Activated T-helper 1 cell treated with anti-CD3 and anti-CD28 coated beads, Interleukin-12 subunit alpha, Interleukin-12 subunit beta, Interleukin-2, Interleukin-4 antibody, amounts not matched to agents 30 ng/mL and 10 ng/mL and 1 ng/mL, durations not matched to agents 14 hours and 24 hours and 36 hours (primary cell): ENCODE measurements at regions of chr11 and their contacts with region 1.

Region 1: GRCh38 chr11:64778508-64779346 is at the start of gene SF1:
- DNase-seq: peak; percentile 99
- H3K4me3 Mint-ChIP-seq: peak within 1 kb of the TSS; percentile 87
- H3K27ac Mint-ChIP-seq: peak within 1 kb of the TSS; percentile 97
- H3K4me1 Mint-ChIP-seq: peaks cover 57% of the 10 kb centered on the region
- H3K27me3 Mint-ChIP-seq: peaks cover 2% of the 10 kb centered on the region
- total RNA-seq, gene SF1: 518 and 538 TPM in 2 replicates

Region 2: DNA sequence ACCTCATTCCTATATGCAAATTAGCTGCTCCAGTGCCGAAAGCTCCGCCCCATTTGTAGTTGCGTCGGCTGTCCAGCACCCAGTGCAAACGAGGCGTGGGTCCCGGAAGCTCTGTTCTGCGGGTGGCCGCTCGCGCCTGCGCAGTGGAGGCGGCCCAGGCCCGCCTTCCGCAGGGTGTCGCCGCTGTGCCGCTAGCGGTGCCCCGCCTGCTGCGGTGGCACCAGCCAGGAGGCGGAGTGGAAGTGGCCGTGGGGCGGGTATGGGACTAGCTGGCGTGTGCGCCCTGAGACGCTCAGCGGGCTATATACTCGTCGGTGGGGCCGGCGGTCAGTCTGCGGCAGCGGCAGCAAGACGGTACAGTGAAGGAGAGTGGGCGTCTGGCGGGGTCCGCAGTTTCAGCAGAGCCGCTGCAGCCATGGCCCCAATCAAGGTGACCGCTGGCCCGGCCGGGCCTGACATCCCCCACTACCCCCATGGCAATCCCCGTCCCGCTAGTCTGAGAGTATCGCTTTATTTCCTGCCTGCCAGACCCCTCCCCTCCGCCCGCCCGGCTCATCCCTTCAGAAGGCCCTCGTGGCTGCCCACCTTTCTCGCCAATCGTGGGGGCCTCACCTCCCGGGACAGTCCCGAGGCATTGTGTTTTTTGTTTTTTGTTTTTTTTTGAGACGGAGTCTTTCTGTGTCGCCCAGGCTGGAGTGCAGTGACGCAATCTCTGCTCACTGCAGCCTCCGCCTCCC is 460.6 kb before region 1 on chr11 and contains the start of gene PRDX5:
- intact Hi-C with region 1: loop called (anchors 1 kb)
- DNase-seq: peak; percentile 96
- H3K4me3 Mint-ChIP-seq: peak within 1 kb of the TSS; percentile 94
- H3K27ac Mint-ChIP-seq: peak within 1 kb of the TSS; percentile 100
- H3K4me1 Mint-ChIP-seq: peaks cover 34% of the 10 kb centered on the region
- H3K27me3 Mint-ChIP-seq: no peaks in the 10 kb centered on the region
- total RNA-seq, gene PRDX5: 89.0 and 100 TPM in 2 replicates

Region 3: DNA sequence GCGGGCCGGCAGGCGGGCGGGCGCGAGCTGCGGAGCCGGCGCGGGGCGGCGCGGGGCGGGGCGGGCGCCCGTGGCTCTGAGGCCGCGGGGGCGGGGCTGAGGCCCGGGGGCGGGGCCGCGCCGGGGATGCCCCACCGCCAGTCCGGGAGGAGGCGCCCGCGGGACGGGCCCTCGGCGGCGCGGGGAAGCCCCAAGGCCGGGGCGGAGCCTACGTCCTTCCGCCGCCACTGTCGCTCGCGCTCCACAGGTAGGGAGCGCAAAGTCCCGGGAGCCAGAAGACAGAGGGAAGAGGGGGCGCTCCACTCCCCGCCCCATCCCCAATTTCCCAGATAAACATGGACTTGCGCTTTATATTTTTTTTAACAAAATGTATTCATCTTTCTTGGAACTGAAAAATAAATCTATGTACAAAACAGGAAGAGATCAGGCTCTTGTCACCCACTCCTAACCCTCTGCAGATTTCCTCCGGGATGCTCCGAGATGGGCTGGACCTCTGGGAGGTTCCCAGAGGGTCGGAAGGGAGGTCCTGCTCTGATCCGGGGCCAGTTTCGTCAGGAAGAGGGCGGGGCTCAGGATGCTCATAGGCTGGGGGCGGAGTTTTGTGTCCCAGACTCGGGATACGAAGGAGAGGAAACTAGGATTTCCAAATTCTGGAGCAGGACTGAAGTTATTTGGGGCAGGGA is 24.6 kb after region 1 on chr11 and contains the start of gene MAP4K2:
- intact Hi-C with region 1: loop called (anchors 1 kb)
- DNase-seq: peak; percentile 89
- H3K4me3 Mint-ChIP-seq: peak within 1 kb of the TSS; percentile 88
- H3K27ac Mint-ChIP-seq: peak within 1 kb of the TSS; percentile 83
- H3K4me1 Mint-ChIP-seq: peaks cover 26% of the 10 kb centered on the region
- H3K27me3 Mint-ChIP-seq: no peaks in the 10 kb centered on the region
- total RNA-seq, gene MAP4K2: 70.2 and 70.7 TPM in 2 replicates

Region 4: DNA sequence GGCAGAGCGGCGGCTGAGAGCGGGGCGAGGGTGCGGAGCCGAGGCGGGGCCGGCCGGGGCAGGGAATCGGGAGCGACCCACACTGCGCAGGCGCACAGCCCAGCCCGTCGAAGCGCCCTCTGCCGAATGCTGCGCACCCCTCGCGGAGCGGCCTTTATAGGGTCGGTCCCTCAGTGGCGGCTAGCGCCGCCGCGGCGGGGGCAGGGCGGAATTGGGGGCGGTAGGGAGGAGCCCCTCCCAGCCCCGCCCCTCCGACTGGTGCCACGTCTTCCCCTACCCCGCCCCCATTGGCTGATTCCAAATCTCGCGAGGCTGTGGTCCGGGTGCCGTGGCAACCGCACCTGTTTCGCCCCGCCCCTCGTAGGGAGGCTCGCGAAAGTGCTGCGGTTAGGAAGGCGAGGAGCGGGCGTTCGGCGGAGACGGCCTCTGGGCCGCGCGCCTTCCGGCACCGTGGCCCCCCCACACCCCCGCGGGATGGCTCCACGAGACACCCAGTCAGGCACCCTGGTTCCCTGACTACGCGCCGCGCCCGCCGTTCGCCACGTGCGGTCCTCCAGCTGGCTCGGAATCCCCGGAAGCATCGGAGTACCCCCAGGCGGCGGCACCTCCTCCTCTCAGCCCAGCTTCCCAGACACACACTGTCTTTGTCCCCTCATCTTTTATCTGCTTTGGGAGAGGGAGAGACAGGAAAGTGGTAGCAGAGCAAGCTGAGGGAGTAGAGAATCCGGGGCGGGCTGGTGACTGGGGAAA is 99.9 kb after region 1 on chr11 and contains the start of gene EHD1:
- intact Hi-C with region 1: loop called (anchors 2 kb)
- DNase-seq: peak; percentile 99
- H3K4me3 Mint-ChIP-seq: peak within 1 kb of the TSS; percentile 99
- H3K27ac Mint-ChIP-seq: peak within 1 kb of the TSS; percentile 83
- H3K4me1 Mint-ChIP-seq: peaks cover 64% of the 10 kb centered on the region
- H3K27me3 Mint-ChIP-seq: no peaks in the 10 kb centered on the region
- total RNA-seq, gene EHD1: 88.0 and 96.9 TPM in 2 replicates

Region 5: GRCh38 chr11:65040847-65041621 is 262.3 kb after region 1 on chr11 and contains the start of gene SAC3D1:
- intact Hi-C with region 1: loop called (anchors 1 kb)
- DNase-seq: peak; percentile 90
- H3K4me3 Mint-ChIP-seq: peak within 1 kb of the TSS; percentile 90
- H3K27ac Mint-ChIP-seq: peak within 1 kb of the TSS; percentile 93
- H3K4me1 Mint-ChIP-seq: peaks cover 19% of the 10 kb centered on the region
- H3K27me3 Mint-ChIP-seq: no peaks in the 10 kb centered on the region
- total RNA-seq, gene SAC3D1: 17.4 and 17.7 TPM in 2 replicates

Region 6: DNA sequence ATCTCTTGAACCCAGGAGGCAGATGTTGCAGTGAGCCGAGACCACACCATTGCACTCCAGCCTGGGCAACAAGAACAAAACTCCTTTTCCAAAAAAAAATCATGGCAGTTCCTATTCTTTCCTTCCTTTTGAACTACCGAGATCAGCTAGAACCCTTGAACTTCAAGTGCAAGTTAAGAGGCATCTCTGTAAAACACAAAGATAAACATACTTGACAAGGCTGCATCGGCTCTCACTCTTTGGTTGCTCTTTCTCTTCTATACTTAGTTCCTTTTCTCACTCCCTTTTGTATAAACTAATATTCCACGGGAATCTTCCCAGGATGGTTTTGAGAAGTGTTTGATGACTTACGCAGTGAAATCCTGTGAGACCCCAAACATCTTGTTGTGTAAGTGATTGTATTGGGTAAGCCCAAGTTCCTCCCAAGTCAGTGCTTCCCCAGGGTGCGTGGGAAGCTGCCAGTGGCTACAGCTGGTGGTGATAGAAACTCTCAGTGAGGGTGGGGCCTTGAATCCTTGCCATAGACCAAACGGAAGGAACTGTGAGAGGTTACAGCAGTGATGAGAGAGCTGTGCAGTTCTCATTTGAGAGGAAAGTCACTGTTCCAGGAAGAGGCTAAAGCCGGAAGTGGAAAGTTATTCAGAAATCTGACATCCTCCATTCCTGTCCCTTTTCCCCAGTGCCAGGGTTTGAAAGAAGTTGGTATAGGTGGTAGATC is 511.9 kb after region 1 on chr11:
- intact Hi-C with region 1: no loop called
- DNase-seq: no peak
- H3K4me3 Mint-ChIP-seq: no peak overlapping the region
- H3K27ac Mint-ChIP-seq: peak overlapping the region; percentile 12
- H3K4me1 Mint-ChIP-seq: no peaks in the 10 kb centered on the region
- H3K27me3 Mint-ChIP-seq: no peaks in the 10 kb centered on the region